ENCODE measurements at regions of chr1 and their contacts with region 1.

Region 1: DNA sequence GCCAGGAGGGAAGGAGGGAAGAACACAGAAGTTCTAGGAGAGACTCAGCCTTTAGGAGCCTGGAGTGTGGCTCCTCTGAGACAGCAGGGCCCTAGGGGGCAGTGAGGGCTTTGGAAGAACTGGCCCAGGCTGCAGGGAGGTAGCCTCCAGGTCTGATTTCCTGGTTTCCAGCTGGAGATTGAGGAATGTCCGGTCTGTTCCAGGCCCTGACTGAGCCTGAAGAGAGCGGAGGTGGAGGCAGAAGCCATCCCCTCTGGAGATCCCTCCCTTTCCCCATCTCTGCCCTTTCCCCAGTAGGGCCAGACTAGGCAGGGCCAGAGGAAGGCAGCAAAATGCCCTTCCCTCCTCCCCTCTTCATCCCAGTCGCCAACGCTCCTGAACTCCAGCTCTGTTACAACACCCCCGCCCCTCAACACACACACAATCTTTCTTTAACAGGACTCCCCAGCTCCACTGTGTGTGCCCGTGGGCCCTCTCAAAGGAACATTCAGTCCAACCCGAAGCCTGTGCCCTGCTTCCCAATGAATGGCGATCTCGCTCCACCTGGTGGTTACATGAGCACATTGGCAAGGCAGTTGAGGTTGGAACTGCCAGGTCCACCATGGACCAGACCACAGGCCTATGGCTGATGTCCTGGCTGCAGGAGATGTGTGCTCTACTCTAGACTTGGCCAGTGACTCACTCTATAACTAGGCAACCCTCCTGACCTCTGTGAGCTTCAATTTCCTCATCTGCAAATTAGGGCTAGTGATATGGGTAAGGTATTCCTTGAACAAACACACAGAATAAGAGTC is 32.0 kb downstream of the MAP7D1 start:
- DNase-seq: peak; percentile 88
- ATAC-seq: peak; percentile 98
- H3K4me3 Mint-ChIP-seq: no peak overlapping the region
- H3K27ac Mint-ChIP-seq: peak overlapping the region; percentile 24
- H3K4me1 Mint-ChIP-seq: peaks cover 2% of the 10 kb centered on the region
- H3K27me3 Mint-ChIP-seq: no peaks in the 10 kb centered on the region
- CTCF ChIP-seq: peak; percentile 81

Region 2: GRCh38 chr1:35807614-35808449 is 380.2 kb before region 1 on chr1 and contains the start of gene AGO4:
- CTCF ChIA-PET with region 1: no interaction called
- POLR2A ChIA-PET with region 1: no interaction called
- intact Hi-C with region 1: no loop called
- DNase-seq: peak; percentile 42
- ATAC-seq: peak; percentile 50
- H3K4me3 Mint-ChIP-seq: peak within 1 kb of the TSS; percentile 78
- H3K27ac Mint-ChIP-seq: peak within 1 kb of the TSS; percentile 81
- H3K4me1 Mint-ChIP-seq: peaks cover 28% of the 10 kb centered on the region
- H3K27me3 Mint-ChIP-seq: no peaks in the 10 kb centered on the region
- CTCF ChIP-seq: no peak
- total RNA-seq, gene AGO4: 3.8 to 3.9 TPM

Region 3: GRCh38 chr1:36134505-36135329 is 53.3 kb before region 1 on chr1:
- CTCF ChIA-PET with region 1: interaction called, 12 read pairs
- POLR2A ChIA-PET with region 1: no interaction called
- intact Hi-C with region 1: no loop called
- DNase-seq: peak; percentile 75
- ATAC-seq: peak; percentile 89
- H3K4me3 Mint-ChIP-seq: no peak overlapping the region
- H3K27ac Mint-ChIP-seq: peak overlapping the region; percentile 28
- H3K4me1 Mint-ChIP-seq: no peaks in the 10 kb centered on the region
- H3K27me3 Mint-ChIP-seq: no peaks in the 10 kb centered on the region
- CTCF ChIP-seq: peak; percentile 90

Region 4: DNA sequence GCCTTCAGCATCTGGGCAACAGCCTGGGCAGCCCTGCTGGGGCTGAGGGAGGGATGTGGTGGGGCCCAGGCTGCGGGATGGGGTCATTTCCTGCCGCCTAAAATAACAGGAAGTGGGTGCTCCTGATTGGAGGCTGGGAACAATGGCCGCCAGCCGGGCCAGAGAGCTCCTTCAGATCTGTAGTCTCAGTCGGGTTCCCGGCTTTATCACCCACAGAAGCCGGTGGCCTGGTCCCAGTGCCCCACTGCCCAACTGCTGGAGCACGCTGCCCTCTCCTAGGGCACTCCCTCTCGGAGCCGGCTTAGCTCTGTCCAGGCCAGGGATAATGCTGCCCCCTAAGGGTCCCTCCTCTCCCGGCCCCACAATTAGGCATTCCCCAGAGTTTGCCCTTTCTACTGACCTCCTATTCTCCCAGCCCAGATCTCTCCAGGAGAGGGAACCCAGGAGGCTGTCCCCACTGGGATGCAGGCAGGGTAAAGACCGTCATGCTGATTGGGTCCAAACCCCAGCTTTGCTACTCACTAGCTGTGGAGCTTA is 27.0 kb before region 1 on chr1:
- CTCF ChIA-PET with region 1: interaction called, 34 read pairs
- POLR2A ChIA-PET with region 1: interaction called, 22 read pairs
- intact Hi-C with region 1: no loop called
- DNase-seq: peak; percentile 88
- ATAC-seq: peak; percentile 56
- H3K4me3 Mint-ChIP-seq: peak overlapping the region; percentile 80
- H3K27ac Mint-ChIP-seq: peak overlapping the region; percentile 94
- H3K4me1 Mint-ChIP-seq: peaks cover 60% of the 10 kb centered on the region
- H3K27me3 Mint-ChIP-seq: no peaks in the 10 kb centered on the region
- CTCF ChIP-seq: no peak

Region 5: DNA sequence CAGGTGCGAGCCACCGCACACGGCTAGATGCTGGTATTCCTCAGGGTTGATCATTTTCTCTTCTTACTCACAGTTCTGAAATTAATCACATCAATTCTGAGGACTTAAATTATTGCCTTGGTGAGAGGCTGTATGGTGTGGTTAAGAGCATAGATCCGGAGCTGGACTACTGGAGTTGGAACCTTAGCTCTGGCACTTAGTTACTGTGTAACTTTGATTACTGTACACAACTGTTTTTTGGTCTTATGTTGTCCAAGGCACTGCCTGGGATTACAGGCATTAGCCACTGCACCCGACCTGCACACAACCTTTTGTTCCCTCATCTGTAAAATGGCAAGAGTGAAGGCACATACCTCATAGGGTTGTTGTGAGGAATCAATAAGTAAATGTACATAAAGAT is 10.6 kb after region 1 on chr1:
- CTCF ChIA-PET with region 1: interaction called, 11 read pairs
- POLR2A ChIA-PET with region 1: no interaction called
- intact Hi-C with region 1: no loop called
- DNase-seq: no peak
- ATAC-seq: no peak
- H3K4me3 Mint-ChIP-seq: no peak overlapping the region
- H3K27ac Mint-ChIP-seq: no peak overlapping the region
- H3K4me1 Mint-ChIP-seq: no peaks in the 10 kb centered on the region
- H3K27me3 Mint-ChIP-seq: no peaks in the 10 kb centered on the region
- CTCF ChIP-seq: no peak

Region 6: GRCh38 chr1:36248250-36248894 is 60.4 kb after region 1 on chr1:
- CTCF ChIA-PET with region 1: no interaction called
- POLR2A ChIA-PET with region 1: no interaction called
- intact Hi-C with region 1: no loop called
- DNase-seq: no peak
- ATAC-seq: no peak
- H3K4me3 Mint-ChIP-seq: no peak overlapping the region
- H3K27ac Mint-ChIP-seq: peak overlapping the region; percentile 76
- H3K4me1 Mint-ChIP-seq: peaks cover 52% of the 10 kb centered on the region
- H3K27me3 Mint-ChIP-seq: no peaks in the 10 kb centered on the region
- CTCF ChIP-seq: no peak

Region 7: DNA sequence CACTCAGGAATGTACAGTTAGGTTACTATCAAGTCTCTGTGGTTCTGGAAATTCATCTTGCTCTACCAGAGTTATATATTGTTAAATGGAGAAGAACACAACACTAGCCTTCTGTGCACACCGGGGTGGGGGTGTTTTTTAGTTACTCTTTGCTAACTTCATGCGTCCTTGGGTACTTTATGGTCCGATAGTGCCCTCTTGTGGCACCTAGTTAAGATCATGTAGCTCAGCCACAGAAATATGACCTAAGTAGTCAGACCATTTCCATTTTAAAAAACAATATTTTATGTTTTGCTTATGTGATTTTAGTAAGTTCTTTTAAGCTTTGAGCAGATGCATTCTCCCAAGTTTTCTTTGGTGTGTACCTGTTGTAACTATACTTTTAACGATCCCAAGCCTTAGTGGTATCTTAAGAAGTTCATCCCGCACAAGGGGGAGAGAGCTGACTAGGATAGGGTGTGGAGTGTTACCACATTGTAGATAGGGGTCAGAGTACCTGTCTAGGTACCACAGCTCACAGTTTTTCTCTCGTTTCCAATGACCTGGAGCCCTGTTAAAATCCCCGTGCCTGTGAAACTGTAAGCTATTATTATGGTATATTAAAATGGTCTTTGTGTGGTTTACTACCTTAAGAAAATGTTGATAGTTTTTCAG is 97.6 kb after region 1 on chr1:
- CTCF ChIA-PET with region 1: interaction called, 21 read pairs
- POLR2A ChIA-PET with region 1: no interaction called
- intact Hi-C with region 1: no loop called
- DNase-seq: peak; percentile 86
- ATAC-seq: peak; percentile 86
- H3K4me3 Mint-ChIP-seq: no peak overlapping the region
- H3K27ac Mint-ChIP-seq: peak overlapping the region; percentile 58
- H3K4me1 Mint-ChIP-seq: peaks cover 32% of the 10 kb centered on the region
- H3K27me3 Mint-ChIP-seq: no peaks in the 10 kb centered on the region
- CTCF ChIP-seq: peak; percentile 76

Measured in activated CD8-positive, alpha-beta T cell treated with anti-CD3 and anti-CD28 coated beads for 36 hours (primary cell).